ENCODE measurements at regions of chr9 and their contacts with region 1.

Region 1: DNA sequence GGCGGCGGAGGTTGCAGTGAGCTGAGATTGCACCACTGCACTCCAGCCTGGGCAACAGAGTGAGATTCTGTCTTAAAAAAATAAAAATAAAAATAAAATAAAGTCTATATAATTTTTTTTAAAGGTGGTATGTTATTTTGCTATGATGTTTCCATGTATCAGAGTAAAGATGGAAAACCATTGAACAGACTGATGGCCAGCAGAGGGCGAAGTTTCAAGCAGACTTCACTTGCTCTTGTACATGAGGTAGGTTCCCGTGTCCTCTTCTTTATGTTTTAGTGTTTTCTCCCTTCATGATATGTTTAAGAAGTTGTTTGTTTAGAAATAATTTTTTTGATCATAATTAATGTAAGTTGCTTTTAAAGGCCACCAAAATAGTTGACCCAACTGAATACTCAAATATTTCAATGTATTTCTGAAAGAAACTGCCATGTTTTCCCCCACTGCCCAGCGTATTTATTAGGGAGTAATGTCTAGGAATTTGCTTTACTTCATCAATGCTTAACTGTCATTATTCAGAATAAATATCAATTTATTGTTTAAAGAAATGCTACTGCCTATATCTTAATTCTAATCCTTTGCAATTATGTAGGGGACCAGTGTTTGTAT is 146.4 kb downstream of the HACD4 start:
- DNase-seq: peak; percentile 69 to 88 (median 86)
- H3K4me3 ChIP-seq: no peak overlapping the region
- H3K27ac ChIP-seq: no peak overlapping the region
- H3K4me1 ChIP-seq: peaks cover 0 to 6% (median 2%) of the 10 kb centered on the region in 4 experiments
- H3K27me3 ChIP-seq: no peaks in the 10 kb centered on the region

Region 2: DNA sequence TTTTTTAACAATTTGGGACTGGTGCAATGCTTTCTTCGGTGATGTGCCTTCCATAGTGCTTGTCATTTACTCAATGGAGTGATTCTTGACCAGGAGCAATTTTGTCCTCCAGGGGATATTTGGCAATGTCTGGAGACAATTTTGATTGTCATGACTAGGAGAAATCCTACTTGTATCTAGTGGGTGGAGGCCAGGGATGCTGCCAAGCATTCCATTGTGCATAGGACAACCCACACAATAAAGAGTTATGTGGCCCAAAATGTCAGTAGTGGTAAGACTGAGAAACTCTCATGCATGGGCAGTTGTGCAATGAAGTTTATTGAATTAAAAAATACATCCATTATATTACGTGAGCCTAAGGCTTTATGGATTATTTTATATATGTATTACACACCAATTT is 130.5 kb before region 1 on chr9:
- CTCF ChIA-PET with region 1: no interaction called
- POLR2A ChIA-PET with region 1: no interaction called
- DNase-seq: no peak
- H3K4me3 ChIP-seq: no peak overlapping the region
- H3K27ac ChIP-seq: no peak overlapping the region
- H3K4me1 ChIP-seq: peaks cover 0 to 5% (median 0%) of the 10 kb centered on the region in 4 experiments
- H3K27me3 ChIP-seq: no peaks in the 10 kb centered on the region

Region 3: DNA sequence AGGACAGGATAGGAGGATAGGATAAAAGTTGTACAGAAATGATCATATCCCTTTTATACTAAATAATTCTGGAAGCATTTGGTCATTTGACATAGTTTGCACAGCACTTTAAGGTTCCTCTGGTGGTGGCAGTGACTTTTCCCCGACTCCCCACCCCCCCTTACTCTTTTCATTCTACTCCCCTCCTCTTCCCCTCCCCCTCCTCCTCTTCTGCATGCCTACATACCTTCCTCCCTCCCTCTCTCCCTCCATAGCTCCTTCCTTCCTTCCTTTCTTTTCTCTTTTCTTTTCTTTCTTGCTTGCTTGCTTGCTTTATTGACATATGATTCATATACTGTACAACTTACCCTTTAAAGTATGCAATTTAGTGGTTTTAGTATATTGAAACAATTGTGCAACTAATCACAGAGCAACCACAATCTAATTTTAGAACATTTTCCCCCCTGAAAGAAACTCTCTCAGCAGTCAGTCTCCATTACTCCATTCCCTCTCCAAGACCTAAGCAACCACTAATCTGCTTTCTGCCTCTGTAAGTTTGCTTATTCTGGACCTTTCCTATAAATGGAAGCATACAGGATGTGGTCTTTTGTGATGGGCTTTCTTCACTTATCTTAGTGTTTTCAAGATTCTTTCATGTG is 12.6 kb before region 1 on chr9:
- CTCF ChIA-PET with region 1: interaction called, 13 read pairs
- POLR2A ChIA-PET with region 1: no interaction called
- DNase-seq: peak in 2 of 3 donors; percentile 21 to 31
- H3K4me3 ChIP-seq: no peak overlapping the region
- H3K27ac ChIP-seq: no peak overlapping the region
- H3K4me1 ChIP-seq: peaks cover 0 to 14% (median 8%) of the 10 kb centered on the region in 4 experiments
- H3K27me3 ChIP-seq: no peaks in the 10 kb centered on the region

Measured in common myeloid progenitor, CD34-positive (primary cell).